ENCODE measurements at regions of chr18 and their contacts with region 1.

Region 1: DNA sequence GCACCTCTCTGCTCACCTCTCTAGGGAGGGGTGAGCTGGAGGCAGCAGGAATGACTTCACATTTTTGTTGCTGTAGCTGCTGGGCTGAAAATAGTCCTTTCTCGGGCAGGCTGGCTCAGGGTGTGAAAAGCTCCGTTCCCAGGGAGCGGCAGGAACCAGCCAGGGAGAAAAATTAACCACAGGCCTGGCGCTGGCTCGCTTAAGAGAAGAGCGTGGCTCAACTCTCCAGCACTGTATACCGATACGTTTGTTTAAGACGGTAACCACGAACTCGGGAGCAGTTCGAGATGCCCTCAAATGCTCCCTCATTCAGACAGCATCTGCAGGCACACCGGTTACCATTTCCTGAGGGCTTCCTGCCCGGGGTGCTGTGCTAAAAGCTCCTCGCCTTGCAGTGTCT is 129.6 kb downstream of the CELF4 start:
- DNase-seq: no peak

Region 2: DNA sequence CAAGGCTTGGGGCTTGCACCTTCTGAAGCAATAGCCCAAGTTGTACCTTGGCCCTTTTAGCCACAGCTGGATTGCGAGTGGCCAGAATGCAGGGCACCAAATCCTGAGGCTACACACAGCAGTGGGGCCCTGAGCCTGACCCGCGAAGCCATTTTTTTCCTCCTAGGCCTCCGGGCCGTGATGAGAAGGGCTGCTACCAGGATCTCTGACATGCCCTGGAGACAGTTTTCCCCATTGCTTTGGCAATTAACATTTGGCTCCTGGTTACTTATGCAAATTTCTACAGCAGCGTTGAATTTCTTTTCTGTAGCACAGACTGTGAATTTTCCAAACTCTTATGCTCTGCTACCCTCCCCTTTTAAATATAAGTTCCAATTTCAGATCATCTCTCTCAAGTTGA is 1194.2 kb before region 1 on chr18:
- intact Hi-C with region 1: loop called in 1 of 2 experiments (anchors 10 kb)
- DNase-seq: no peak

Region 3: DNA sequence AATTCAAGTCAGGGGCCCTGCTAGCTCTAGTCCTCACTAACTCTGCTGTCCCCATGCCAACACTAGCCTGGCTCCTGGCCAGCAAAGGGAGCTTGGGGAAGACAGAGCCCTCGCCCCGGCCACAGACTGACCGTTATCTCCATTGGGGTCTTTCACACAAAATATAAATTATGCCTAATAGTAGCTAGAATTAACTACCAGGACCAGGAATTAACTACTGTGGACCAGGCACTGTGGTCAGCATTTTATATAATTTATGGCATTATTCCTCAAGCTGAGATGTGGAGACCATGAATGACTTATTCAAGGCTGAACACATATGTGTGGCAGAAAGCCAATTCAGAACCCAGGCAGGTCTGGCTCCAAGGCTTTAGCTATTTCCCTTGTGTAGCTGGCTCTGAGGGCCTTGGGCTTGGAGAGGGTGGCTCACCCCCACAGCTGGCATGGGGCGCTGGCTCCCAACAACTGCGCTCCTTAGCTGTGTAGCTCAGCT is 80.4 kb after region 1 on chr18:
- intact Hi-C with region 1: no loop called
- DNase-seq: no peak

Region 4: DNA sequence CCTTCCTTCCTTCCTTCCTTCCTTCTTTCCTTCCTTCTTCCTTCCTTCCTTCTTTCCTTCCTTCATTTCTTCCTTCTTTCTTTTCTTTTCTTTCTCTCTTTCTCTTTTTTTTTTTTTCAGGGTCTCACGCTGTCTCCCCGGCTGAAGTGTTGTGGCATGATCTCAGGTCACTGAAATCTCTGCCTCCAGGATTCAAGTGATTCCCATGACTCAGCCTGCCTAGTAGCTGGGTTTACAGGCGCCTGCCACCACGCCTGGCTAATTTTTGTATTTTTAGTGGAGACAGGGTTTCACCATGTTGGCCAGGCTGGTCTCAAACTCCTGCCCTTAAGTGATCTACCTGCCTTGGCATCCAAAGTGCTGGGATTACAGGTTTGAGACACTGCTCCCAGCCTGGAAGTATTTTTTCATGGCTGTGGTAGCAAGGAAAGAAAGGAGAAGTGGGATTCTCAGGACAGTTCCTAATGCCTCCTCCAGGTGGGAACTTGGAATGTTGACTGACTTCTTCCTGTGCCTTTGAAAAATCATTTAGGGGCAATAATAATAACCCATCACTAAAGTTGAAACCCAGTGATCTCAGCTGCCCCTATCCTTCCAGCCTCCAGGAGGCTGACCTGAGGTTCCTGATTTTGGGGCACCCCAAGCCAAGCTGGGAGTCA is 218.8 kb after region 1 on chr18:
- intact Hi-C with region 1: loop called in 1 of 2 experiments (anchors 5 kb)
- DNase-seq: no peak